ENCODE measurements at regions of chr6 and their contacts with region 1.

Region 1: GRCh38 chr6:75349262-75349984 is 64.8 kb upstream of the TMEM30A start:
- DNase-seq: peak; percentile 12
- H3K4me3 ChIP-seq: peak overlapping the region; percentile 34
- CTCF ChIP-seq: peak; percentile 35

Region 2: GRCh38 chr6:75306064-75306463 is 43.4 kb before region 1 on chr6:
- in situ Hi-C with region 1: no loop called
- DNase-seq: no peak
- H3K4me3 ChIP-seq: no peak overlapping the region
- CTCF ChIP-seq: no peak

Region 3: GRCh38 chr6:75414445-75415021 is 65.1 kb after region 1 on chr6:
- in situ Hi-C with region 1: no loop called
- DNase-seq: no peak
- H3K4me3 ChIP-seq: no peak overlapping the region
- CTCF ChIP-seq: no peak

Region 4: DNA sequence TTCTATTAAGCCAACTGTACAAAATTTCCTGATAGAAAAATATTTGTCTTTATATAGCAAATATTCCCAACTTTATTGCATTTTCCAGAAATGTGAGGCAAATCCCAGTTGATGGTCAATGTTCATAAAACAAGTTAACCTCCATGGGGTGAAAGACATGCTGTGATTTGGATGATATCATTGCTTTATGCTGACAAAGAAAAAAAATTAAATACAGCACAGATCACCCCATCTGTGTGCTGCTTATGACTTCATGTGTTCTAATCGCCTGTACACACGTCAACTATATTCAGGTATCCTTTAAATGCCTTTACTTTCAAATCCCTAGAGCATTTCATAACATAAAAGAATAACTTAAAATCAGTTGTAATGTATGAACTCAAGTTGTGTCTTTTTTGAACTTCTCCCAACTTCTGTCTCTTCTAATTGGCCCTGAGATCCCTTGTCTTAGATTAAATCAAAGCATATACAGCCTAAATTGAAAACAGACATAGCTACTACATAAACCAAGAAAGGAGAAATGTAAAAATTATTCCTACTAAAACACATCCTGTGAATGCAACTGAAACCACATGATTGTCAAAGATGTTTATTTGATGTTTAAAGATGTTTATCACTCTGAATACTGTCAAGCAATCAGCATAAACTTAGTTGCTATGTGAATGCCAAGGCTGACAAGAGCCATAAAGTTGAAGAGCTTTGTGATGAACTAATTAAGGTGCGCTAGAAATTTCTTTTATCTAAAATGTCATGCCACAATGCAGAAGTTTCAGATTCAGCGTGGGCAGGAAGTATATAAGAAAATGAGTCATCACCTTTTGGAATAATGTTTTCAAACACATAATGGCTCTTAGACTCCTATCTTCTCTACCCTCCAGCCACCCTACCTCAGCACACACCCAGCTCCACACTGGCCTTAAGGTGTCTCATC is 75.5 kb after region 1 on chr6:
- in situ Hi-C with region 1: loop called (anchors 10 kb)
- DNase-seq: no peak
- H3K4me3 ChIP-seq: no peak overlapping the region
- CTCF ChIP-seq: no peak